Activated naive CD4-positive, alpha-beta T cell treated with anti-CD3 and anti-CD28 coated beads for 36 hours (primary cell): ENCODE measurements at regions of chr6 and their contacts with region 1.

Region 1: GRCh38 chr6:14876778-14877613 is 368.9 kb upstream of the JARID2 start:
- DNase-seq: peak; percentile 64
- H3K4me3 Mint-ChIP-seq: peak overlapping the region; percentile 7
- H3K27ac Mint-ChIP-seq: peak overlapping the region; percentile 84
- H3K4me1 Mint-ChIP-seq: peaks cover 68% of the 10 kb centered on the region
- H3K27me3 Mint-ChIP-seq: no peaks in the 10 kb centered on the region

Region 2: GRCh38 chr6:14210663-14211561 is 666.1 kb before region 1 on chr6:
- CTCF ChIA-PET with region 1: no interaction called
- intact Hi-C with region 1: loop called (anchors 2 kb)
- DNase-seq: peak; percentile 88
- H3K4me3 Mint-ChIP-seq: peak overlapping the region; percentile 79
- H3K27ac Mint-ChIP-seq: peak overlapping the region; percentile 71
- H3K4me1 Mint-ChIP-seq: peaks cover 12% of the 10 kb centered on the region
- H3K27me3 Mint-ChIP-seq: no peaks in the 10 kb centered on the region

Region 3: GRCh38 chr6:14542670-14543366 is 334.2 kb before region 1 on chr6:
- CTCF ChIA-PET with region 1: interaction called, 3 read pairs
- intact Hi-C with region 1: loop called (anchors 2 kb)
- DNase-seq: peak; percentile 92
- H3K4me3 Mint-ChIP-seq: no peak overlapping the region
- H3K27ac Mint-ChIP-seq: peak overlapping the region; percentile 64
- H3K4me1 Mint-ChIP-seq: peaks cover 24% of the 10 kb centered on the region
- H3K27me3 Mint-ChIP-seq: no peaks in the 10 kb centered on the region

Region 4: DNA sequence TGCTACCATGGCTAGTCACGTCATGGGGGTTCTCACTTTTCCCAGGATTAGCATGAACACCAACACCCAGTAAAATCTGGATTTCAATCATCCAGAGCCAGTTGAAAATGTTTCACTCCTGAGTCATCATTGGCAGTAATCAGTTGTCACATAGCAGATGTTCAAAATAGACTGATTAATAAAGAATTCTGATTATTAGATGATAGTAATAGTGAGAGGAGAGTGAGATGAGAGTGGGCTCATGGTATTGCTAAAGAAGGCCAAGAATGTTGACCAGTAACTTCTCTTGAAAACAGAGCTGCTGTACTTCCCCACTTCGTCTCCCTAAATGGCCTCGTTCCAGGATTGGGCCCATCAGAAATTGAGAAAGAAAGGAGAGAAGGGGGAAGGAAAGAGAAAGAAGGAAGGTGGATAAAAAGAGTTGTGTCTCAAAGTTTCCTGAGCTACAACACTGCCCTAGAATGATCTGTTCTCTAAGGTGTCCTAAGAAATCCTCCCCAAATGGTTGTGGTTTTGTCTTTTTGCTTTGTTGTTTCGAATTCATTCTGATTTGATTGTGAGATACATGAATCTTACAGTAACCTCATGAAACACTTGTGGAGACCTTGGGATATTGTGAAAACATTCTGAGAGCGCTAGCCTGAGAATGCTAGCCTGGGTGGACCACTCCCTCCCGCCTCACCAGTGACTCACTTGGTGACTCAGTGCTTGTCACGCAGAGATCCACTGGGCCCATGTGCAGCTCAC is 133.4 kb before region 1 on chr6:
- CTCF ChIA-PET with region 1: no interaction called
- intact Hi-C with region 1: loop called (anchors 1 kb)
- DNase-seq: peak; percentile 92
- H3K4me3 Mint-ChIP-seq: no peak overlapping the region
- H3K27ac Mint-ChIP-seq: peak overlapping the region; percentile 98
- H3K4me1 Mint-ChIP-seq: peaks cover 69% of the 10 kb centered on the region
- H3K27me3 Mint-ChIP-seq: no peaks in the 10 kb centered on the region

Region 5: GRCh38 chr6:15184441-15184861 is 307.5 kb after region 1 on chr6:
- CTCF ChIA-PET with region 1: no interaction called
- intact Hi-C with region 1: loop called (anchors 1 kb)
- DNase-seq: peak; percentile 78
- H3K4me3 Mint-ChIP-seq: no peak overlapping the region
- H3K27ac Mint-ChIP-seq: peak overlapping the region; percentile 99
- H3K4me1 Mint-ChIP-seq: peaks cover 25% of the 10 kb centered on the region
- H3K27me3 Mint-ChIP-seq: no peaks in the 10 kb centered on the region

Region 6: DNA sequence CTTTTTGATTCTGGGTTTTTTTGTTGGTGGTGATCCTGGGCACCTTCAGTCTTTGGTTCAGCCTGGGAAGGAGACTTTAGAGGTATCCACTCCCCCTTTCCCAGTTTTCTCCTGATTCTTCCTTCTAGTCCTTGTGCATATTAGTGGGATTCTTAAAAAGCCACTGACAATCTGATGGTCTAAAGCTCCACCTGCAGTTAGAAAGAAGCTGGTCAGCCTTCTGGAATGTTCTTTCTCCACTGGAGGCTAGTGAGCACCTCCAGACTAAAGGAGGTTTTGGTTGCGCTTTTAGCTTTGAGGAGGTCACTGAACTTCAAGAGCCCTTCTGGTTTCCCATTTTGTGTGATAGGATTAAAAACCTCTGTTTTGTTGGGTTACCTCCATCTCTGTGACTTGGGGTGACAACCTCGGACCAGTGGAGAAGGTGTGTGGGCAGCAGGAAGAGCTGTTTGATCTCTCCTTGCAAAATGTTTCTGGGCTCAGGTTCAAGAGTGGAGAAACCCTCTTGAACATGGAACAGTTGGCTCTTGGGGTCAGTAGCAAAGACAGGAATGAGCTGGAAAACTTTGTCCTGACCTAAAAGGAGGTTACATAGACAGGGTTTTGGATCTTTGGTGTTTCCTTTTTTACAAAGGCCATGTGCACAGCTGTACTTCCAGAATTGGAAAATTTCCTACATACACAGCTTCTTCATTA is 397.8 kb after region 1 on chr6:
- CTCF ChIA-PET with region 1: no interaction called
- intact Hi-C with region 1: no loop called
- DNase-seq: no peak
- H3K4me3 Mint-ChIP-seq: no peak overlapping the region
- H3K27ac Mint-ChIP-seq: no peak overlapping the region
- H3K4me1 Mint-ChIP-seq: peaks cover 72% of the 10 kb centered on the region
- H3K27me3 Mint-ChIP-seq: no peaks in the 10 kb centered on the region

Region 7: GRCh38 chr6:15399641-15400470 is 522.9 kb after region 1 on chr6:
- CTCF ChIA-PET with region 1: no interaction called
- intact Hi-C with region 1: loop called (anchors 5 kb)
- DNase-seq: no peak
- H3K4me3 Mint-ChIP-seq: peak overlapping the region; percentile 72
- H3K27ac Mint-ChIP-seq: peak overlapping the region; percentile 48
- H3K4me1 Mint-ChIP-seq: peaks cover 73% of the 10 kb centered on the region
- H3K27me3 Mint-ChIP-seq: no peaks in the 10 kb centered on the region

Region 8: GRCh38 chr6:16471222-16471909 is 1594.4 kb after region 1 on chr6:
- CTCF ChIA-PET with region 1: no interaction called
- intact Hi-C with region 1: loop called (anchors 5 kb)
- DNase-seq: no peak
- H3K4me3 Mint-ChIP-seq: no peak overlapping the region
- H3K27ac Mint-ChIP-seq: peak overlapping the region; percentile 68
- H3K4me1 Mint-ChIP-seq: peaks cover 60% of the 10 kb centered on the region
- H3K27me3 Mint-ChIP-seq: no peaks in the 10 kb centered on the region